Sigmoid colon (tissue), 7 donors: ENCODE measurements at regions of chr2 and their contacts with region 1.

Region 1: DNA sequence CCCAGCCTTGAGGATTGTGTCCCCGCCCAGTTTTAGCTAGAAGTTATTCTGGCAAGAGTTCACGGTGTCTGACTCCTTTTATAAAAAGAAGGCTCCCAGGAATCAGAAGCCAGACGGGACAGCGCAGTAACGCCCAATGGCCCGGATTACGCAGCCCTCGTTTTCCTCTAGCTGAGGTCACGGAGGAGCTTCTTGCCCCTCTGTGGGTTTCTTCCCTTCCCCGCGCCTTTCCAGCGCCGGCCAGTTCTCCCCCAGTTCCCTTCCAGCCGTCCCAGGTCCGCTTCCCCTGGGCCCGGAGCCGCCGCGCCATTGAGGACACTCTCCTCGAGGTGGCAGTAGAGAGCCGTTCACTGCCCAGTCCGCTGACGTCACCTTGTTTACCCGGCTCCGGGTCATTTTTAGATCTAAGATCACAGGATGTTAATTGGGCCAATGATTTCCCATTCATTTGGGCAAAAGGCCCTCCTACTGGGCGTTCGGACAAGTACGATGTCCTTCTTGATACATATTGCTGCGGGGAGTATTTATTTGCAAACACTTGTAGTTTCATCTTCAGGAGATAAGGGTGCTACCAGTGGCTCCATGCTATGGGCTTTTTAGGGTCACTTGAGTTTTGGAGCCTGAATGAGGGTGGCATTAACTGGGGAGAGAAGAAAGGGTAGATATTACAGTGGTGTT is 81.5 kb upstream of the PPM1B start:
- DNase-seq: peak; percentile 90
- H3K4me3 ChIP-seq: peak overlapping the region; percentile 13 to 45 (median 36)
- H3K27ac ChIP-seq: peak overlapping the region; percentile 53 to 74 (median 68)
- H3K4me1 ChIP-seq: peaks cover 0 to 15% (median 9%) of the 10 kb centered on the region in 4 donors
- H3K27me3 ChIP-seq: no peaks in the 10 kb centered on the region
- CTCF ChIP-seq: peak; percentile 74 to 95 (median 90)
- EP300 ChIP-seq: no peak
- POLR2A ChIP-seq: no peak

Region 2: GRCh38 chr2:44233450-44234128 is 146.4 kb after region 1 on chr2:
- intact Hi-C with region 1: no loop called
- DNase-seq: no peak
- H3K4me3 ChIP-seq: no peak overlapping the region
- H3K27ac ChIP-seq: no peak overlapping the region
- H3K4me1 ChIP-seq: peaks cover 0 to 8% (median 6%) of the 10 kb centered on the region in 4 donors
- H3K27me3 ChIP-seq: no peaks in the 10 kb centered on the region
- CTCF ChIP-seq: no peak
- EP300 ChIP-seq: no peak
- POLR2A ChIP-seq: no peak

Region 3: GRCh38 chr2:44291281-44292248 is 204.4 kb after region 1 on chr2:
- intact Hi-C with region 1: loop called (anchors 1 kb)
- DNase-seq: no peak
- H3K4me3 ChIP-seq: no peak overlapping the region
- H3K27ac ChIP-seq: no peak overlapping the region
- H3K4me1 ChIP-seq: peaks cover 0 to 11% (median 8%) of the 10 kb centered on the region in 4 donors
- H3K27me3 ChIP-seq: no peaks in the 10 kb centered on the region
- CTCF ChIP-seq: peak in 3 of 4 experiments; percentile 34 to 43 (median 38)
- EP300 ChIP-seq: no peak
- POLR2A ChIP-seq: no peak